Calu3 (cell line): ENCODE measurements at regions of chr3 and their contacts with region 1.

Region 1: DNA sequence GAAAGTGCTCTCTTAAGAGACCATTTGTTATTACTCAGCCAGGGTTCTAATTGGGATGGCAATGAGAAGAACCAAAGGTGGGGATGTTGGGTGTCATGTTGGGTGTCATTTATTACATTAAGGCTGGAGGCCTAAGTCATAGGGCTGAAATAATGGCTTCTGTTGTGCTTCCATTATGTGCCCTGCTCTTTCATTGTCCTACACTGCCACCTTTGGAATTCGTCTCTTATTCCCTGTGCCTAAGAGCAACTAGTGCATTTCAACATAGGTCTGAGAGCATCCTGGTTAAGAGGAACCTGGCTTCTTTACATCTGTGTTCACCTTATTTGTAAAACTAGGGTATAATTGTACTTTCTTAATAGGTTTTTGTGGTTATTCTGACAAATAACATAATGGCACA is 32.2 kb downstream of the RIOX2 start:
- DNase-seq: no peak
- H3K4me3 Mint-ChIP-seq: no peak overlapping the region
- H3K27ac Mint-ChIP-seq: no peak overlapping the region
- H3K4me1 Mint-ChIP-seq: no peaks in the 10 kb centered on the region
- H3K27me3 Mint-ChIP-seq: no peaks in the 10 kb centered on the region
- CTCF ChIP-seq: no peak

Region 2: GRCh38 chr3:97793420-97794019 is 146.5 kb before region 1 on chr3:
- CTCF ChIA-PET with region 1: no interaction called
- intact Hi-C with region 1: loop called (anchors 10 kb)
- DNase-seq: peak; percentile 22
- H3K4me3 Mint-ChIP-seq: no peak overlapping the region
- H3K27ac Mint-ChIP-seq: no peak overlapping the region
- H3K4me1 Mint-ChIP-seq: no peaks in the 10 kb centered on the region
- H3K27me3 Mint-ChIP-seq: no peaks in the 10 kb centered on the region
- CTCF ChIP-seq: peak; percentile 37

Region 3: DNA sequence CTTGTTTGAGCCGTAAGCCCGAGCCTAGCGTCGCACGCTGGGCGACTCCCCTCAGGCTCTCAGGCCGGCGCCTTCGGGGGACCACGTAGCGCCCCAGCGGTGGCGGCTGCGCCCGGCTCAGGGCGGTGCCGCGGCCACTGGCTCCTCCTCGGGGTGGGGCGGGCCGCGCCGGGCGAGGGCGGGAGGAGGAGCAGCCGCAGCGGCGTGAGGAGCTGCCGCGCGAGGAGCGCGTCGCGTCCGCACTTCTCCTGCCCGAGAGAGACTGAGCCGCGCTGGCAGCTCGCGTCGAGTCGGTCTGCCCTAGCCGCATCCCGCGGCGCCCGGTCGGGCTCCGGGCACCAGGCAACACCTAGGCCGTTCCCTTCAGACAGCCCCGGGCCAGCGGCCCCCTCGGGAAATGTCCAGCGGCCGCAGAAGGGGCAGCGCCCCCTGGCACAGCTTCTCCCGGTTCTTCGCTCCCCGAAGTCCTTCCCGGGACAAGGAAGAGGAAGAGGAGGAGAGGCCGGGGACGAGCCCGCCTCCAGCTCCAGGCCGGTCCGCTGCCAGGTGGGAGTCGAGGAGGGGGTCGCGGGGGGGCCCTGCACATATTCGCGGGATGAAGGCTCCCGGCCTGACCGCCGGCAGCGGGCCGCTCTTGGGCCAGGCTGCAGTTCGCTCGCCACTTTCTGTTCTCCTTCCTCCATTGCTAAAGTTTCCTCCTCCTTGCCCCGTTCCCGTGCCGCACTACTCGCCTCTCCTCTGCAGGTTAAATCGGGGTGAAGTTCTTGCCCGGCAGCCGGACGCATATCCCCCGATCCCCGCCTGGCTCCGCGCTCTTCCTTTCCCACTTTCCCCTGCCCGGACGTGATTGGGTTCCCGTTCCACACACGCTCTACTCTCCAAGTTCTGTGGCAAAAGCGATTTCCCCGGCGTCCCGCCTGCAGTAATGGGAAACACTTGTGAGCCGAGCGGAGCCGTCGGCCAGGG is 117.9 kb before region 1 on chr3 and contains the start of gene CRYBG3:
- CTCF ChIA-PET with region 1: interaction called, 3 read pairs
- intact Hi-C with region 1: loop called (anchors 5 kb)
- DNase-seq: peak; percentile 85
- H3K4me3 Mint-ChIP-seq: peak within 1 kb of the TSS; percentile 82
- H3K27ac Mint-ChIP-seq: peak within 1 kb of the TSS; percentile 73
- H3K4me1 Mint-ChIP-seq: peaks cover 26% of the 10 kb centered on the region
- H3K27me3 Mint-ChIP-seq: no peaks in the 10 kb centered on the region
- CTCF ChIP-seq: peak; percentile 12
- total RNA-seq, gene CRYBG3: 10.3 and 10.6 TPM in 2 replicates

Region 4: GRCh38 chr3:97835761-97836160 is 104.3 kb before region 1 on chr3:
- CTCF ChIA-PET with region 1: no interaction called
- intact Hi-C with region 1: no loop called
- DNase-seq: no peak
- H3K4me3 Mint-ChIP-seq: no peak overlapping the region
- H3K27ac Mint-ChIP-seq: no peak overlapping the region
- H3K4me1 Mint-ChIP-seq: no peaks in the 10 kb centered on the region
- H3K27me3 Mint-ChIP-seq: no peaks in the 10 kb centered on the region
- CTCF ChIP-seq: no peak